ENCODE measurements at regions of chr4 and their contacts with region 1.

Region 1: GRCh38 chr4:56467284-56468096 is at the start of gene SRP72:
- DNase-seq: peak; percentile 81 to 95 (median 90)
- ATAC-seq: peak; percentile 96
- H3K4me3 ChIP-seq: peak within 1 kb of the TSS; percentile 63 to 98
- H3K4me3 Mint-ChIP-seq: peak within 1 kb of the TSS; percentile 100
- H3K27ac ChIP-seq: peak within 1 kb of the TSS; percentile 69 to 92
- H3K27ac Mint-ChIP-seq: peak within 1 kb of the TSS; percentile 100
- H3K4me1 ChIP-seq: peaks cover 44% of the 10 kb centered on the region
- H3K4me1 Mint-ChIP-seq: peaks cover 60% of the 10 kb centered on the region
- H3K27me3 ChIP-seq: no peaks in the 10 kb centered on the region
- H3K27me3 Mint-ChIP-seq: no peaks in the 10 kb centered on the region
- CTCF ChIP-seq: no peak
- total RNA-seq, gene SRP72: 142 to 148 TPM

Region 2: GRCh38 chr4:55853484-55854046 is 613.9 kb before region 1 on chr4 and contains the start of gene EXOC1:
- CTCF ChIA-PET with region 1: no interaction called
- POLR2A ChIA-PET with region 1: no interaction called
- intact Hi-C with region 1: loop called in 1 of 2 experiments (anchors 5 kb)
- DNase-seq: peak; percentile 90 to 98 (median 97)
- ATAC-seq: peak; percentile 96
- H3K4me3 ChIP-seq: peak within 1 kb of the TSS; percentile 96
- H3K4me3 Mint-ChIP-seq: peak within 1 kb of the TSS; percentile 36
- H3K27ac ChIP-seq: peak within 1 kb of the TSS; percentile 70 to 86
- H3K27ac Mint-ChIP-seq: peak within 1 kb of the TSS; percentile 64
- H3K4me1 ChIP-seq: peaks cover 40% of the 10 kb centered on the region
- H3K4me1 Mint-ChIP-seq: peaks cover 38% of the 10 kb centered on the region
- H3K27me3 ChIP-seq: no peaks in the 10 kb centered on the region
- H3K27me3 Mint-ChIP-seq: no peaks in the 10 kb centered on the region
- CTCF ChIP-seq: no peak
- total RNA-seq, gene EXOC1: 12.1 to 14.5 TPM

Region 3: DNA sequence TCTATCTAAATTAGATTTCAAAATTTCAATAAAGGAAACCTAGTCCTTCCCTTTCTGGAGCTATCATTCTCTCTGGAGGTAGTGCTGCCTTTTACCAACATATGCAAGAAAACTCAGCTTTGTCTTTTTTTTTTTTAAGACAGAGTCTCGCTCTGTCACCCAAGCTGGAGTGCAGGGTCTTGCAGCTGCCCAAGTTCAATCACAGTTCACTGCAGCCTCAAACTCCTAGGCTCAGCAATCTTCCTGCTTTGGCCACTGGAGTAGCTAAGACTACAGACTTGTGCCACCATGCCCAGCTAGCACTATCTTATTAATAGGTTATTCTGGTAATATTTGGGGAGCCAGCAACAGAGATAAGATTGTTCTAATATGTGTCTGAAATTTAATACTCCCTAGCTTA is 92.5 kb before region 1 on chr4:
- CTCF ChIA-PET with region 1: no interaction called
- POLR2A ChIA-PET with region 1: no interaction called
- intact Hi-C with region 1: no loop called
- DNase-seq: no peak
- ATAC-seq: no peak
- H3K4me3 ChIP-seq: no peak overlapping the region
- H3K4me3 Mint-ChIP-seq: no peak overlapping the region
- H3K27ac ChIP-seq: no peak overlapping the region
- H3K27ac Mint-ChIP-seq: no peak overlapping the region
- H3K4me1 ChIP-seq: no peaks in the 10 kb centered on the region
- H3K4me1 Mint-ChIP-seq: peaks cover 2% of the 10 kb centered on the region
- H3K27me3 ChIP-seq: no peaks in the 10 kb centered on the region
- H3K27me3 Mint-ChIP-seq: no peaks in the 10 kb centered on the region
- CTCF ChIP-seq: no peak

Region 4: DNA sequence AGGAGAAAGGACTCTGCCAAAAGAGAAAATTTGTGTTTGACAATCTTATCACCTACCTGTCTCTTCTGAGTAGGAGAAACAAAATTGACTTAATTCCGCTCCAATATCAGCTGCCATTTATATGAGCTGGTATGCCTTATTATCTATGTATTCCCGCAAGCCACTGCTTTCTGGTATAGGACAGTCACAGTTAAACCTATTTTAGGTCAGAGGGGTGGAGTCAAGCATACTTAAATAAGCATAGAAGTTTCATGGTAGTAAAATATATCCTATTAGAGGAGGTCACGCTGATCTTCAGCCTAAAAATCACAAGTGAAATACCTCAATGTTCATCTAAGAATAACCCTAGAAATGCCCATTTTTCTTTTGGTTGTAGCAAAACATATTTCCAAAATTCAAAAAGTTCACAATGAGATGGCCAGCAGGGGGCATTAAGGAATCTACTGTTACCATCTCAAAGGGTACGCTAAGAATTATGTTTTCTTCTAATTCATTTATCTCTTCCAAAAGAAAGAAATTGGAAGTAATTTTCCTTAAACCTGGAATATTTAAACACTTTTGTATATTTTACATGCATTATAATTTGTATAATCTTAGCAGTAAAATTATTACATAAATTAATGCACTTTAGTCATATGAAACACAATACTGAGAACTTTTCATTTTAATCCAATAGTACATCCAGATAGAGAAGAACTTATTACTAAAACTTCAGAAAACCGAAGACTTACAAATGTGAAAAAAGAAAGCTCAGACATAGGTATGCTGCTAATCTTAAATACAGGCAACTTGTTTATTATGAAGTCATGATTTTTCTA is 42.6 kb before region 1 on chr4:
- CTCF ChIA-PET with region 1: interaction called, 6 read pairs
- POLR2A ChIA-PET with region 1: no interaction called
- intact Hi-C with region 1: loop called (anchors 1 to 2 kb)
- DNase-seq: peak in 7 of 9 experiments; percentile 21 to 71 (median 52)
- ATAC-seq: peak; percentile 61
- H3K4me3 ChIP-seq: no peak overlapping the region
- H3K4me3 Mint-ChIP-seq: no peak overlapping the region
- H3K27ac ChIP-seq: no peak overlapping the region
- H3K27ac Mint-ChIP-seq: no peak overlapping the region
- H3K4me1 ChIP-seq: no peaks in the 10 kb centered on the region
- H3K4me1 Mint-ChIP-seq: peaks cover 8% of the 10 kb centered on the region
- H3K27me3 ChIP-seq: no peaks in the 10 kb centered on the region
- H3K27me3 Mint-ChIP-seq: no peaks in the 10 kb centered on the region
- CTCF ChIP-seq: peak; percentile 90

Region 5: DNA sequence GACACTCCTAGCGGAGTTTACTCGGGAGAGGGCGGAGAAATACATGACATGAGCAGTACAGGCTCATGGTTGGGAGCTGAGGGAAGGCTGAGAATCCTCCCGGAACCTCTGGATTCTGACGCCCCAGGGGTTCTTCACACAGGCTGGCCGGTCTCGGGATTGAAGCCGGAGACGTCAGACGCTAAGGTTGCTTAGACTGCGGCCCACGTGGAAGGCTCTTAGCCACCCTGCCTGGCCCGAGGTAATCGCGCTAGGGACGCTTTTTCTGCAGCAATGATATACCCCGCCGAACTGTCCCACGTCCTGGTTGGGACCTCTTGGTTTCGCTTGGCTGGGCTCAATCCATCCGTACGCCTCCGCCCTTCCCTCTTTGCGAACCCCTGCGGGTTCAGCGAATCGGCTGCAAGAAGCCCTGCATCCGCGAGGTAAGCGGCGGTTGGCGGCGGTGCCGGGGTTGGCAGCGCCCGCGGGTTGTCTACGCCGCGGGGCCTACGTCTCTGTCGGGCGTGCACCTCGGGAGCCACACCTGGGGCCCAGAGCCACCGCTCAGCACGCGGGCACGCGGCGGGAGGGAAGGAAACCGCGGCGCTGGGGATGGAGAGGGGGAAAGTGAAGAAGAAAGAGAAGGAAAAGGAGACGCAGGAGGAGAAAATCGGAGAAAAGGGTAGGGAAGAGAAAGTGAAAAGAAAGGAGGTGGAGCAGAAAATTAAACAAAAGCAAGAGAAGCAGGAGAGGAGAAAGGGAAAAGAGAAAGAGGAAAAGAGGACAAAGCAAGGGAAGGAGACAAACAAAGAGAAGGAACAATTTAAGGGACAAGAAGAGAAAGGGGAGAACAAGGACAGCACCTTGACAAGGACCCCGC is 38.0 kb after region 1 on chr4 and contains the start of gene ARL9:
- CTCF ChIA-PET with region 1: no interaction called
- POLR2A ChIA-PET with region 1: no interaction called
- intact Hi-C with region 1: loop called in 1 of 2 experiments (anchors 2 kb)
- DNase-seq: peak; percentile 40 to 83 (median 74)
- ATAC-seq: peak; percentile 97
- H3K4me3 ChIP-seq: peak within 1 kb of the TSS; percentile 50 to 70
- H3K4me3 Mint-ChIP-seq: peak within 1 kb of the TSS; percentile 89
- H3K27ac ChIP-seq: peak within 1 kb of the TSS in 1 of 2 experiments; percentile 26
- H3K27ac Mint-ChIP-seq: peak within 1 kb of the TSS; percentile 82
- H3K4me1 ChIP-seq: peaks cover 15% of the 10 kb centered on the region
- H3K4me1 Mint-ChIP-seq: peaks cover 17% of the 10 kb centered on the region
- H3K27me3 ChIP-seq: no peaks in the 10 kb centered on the region
- H3K27me3 Mint-ChIP-seq: peaks cover 2% of the 10 kb centered on the region
- CTCF ChIP-seq: no peak
- total RNA-seq, gene ARL9: 0.19 TPM in 1 of 2 experiments, not detected in the other

Region 6: DNA sequence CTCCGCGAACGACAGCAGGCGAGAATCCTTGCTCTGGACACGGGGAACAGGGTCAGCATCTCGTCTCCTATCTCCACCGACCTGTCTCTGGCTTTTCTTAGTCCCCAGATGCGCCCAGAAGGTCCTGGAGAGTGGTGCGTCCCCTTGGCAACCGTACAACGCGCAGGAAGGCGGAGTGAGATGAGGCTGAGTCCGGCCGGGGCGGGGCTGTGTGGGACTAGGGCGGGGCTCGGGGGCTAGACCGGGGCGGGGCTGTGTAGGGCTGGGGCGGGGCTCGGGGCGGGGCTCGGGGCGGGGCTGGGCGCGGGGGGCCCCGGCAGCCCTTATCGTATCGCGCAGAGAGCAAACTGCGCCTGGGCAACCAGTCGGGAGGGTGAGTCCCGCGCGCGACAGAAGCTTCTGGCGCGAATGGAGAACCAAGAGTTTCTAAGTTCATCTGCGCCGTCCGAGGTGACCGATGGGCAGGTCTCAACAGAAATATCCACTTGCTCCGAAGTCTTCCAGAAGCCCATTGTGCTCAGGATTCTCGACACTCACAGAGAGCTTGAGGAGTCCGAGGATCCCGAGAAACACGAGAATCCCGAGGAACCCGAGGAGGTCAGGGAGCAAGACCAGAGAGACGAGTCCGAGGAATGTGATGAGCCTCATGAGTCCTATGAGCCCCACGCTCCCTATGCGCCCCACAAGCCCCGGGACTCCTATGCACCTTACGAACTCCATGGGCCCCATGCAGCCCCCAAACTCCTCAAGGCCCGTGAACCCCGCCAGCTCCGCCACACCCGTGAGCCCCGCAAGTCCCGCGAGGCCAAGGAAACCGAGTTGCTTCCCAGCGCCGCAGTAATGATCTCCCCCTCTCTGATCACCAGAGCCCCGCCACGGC is 63.0 kb after region 1 on chr4:
- CTCF ChIA-PET with region 1: no interaction called
- POLR2A ChIA-PET with region 1: interaction called, 3 read pairs
- intact Hi-C with region 1: loop called in 1 of 2 experiments (anchors 1 kb)
- DNase-seq: peak; percentile 51 to 86 (median 81)
- ATAC-seq: peak; percentile 96
- H3K4me3 ChIP-seq: peak overlapping the region; percentile 59 to 87
- H3K4me3 Mint-ChIP-seq: no peak overlapping the region
- H3K27ac ChIP-seq: no peak overlapping the region
- H3K27ac Mint-ChIP-seq: no peak overlapping the region
- H3K4me1 ChIP-seq: peaks cover 6% of the 10 kb centered on the region
- H3K4me1 Mint-ChIP-seq: no peaks in the 10 kb centered on the region
- H3K27me3 ChIP-seq: peaks cover 3 to 5% of the 10 kb centered on the region in 2 experiments
- H3K27me3 Mint-ChIP-seq: peaks cover 9% of the 10 kb centered on the region
- CTCF ChIP-seq: no peak

Region 7: DNA sequence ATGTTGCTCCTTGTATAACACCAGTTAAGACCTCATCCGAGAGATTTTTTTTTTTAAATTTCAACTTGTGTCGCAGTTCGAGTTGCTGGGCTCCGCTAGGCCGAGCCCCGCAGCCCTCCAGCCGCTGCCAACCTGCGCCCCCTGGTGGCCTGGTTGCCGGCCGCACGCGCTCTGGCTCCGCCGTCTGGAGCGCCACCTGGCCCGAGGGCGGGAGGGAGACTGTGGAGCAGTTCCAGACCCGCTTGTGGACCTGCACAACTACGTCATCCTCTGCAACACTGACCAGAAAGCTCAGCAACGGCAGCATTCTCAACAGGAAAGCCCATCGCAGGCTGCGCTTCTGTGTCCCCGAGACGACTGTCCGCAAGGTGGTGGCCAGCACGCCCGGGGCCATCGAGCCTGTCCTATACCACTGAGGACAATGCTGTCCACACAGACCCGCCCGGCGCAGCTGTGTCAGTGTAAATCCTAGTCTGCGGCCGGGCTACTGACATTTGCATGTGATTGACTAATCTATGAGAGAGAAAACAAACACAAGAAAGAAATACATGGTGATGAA is 77.2 kb after region 1 on chr4:
- CTCF ChIA-PET with region 1: no interaction called
- POLR2A ChIA-PET with region 1: no interaction called
- intact Hi-C with region 1: loop called (anchors 1 to 2 kb)
- DNase-seq: peak; percentile 77 to 95 (median 85)
- ATAC-seq: peak; percentile 99
- H3K4me3 ChIP-seq: peak overlapping the region; percentile 27 to 38
- H3K4me3 Mint-ChIP-seq: peak overlapping the region; percentile 73
- H3K27ac ChIP-seq: no peak overlapping the region
- H3K27ac Mint-ChIP-seq: no peak overlapping the region
- H3K4me1 ChIP-seq: peaks cover 14% of the 10 kb centered on the region
- H3K4me1 Mint-ChIP-seq: peaks cover 15% of the 10 kb centered on the region
- H3K27me3 ChIP-seq: peaks cover 0 to 6% of the 10 kb centered on the region in 2 experiments
- H3K27me3 Mint-ChIP-seq: no peaks in the 10 kb centered on the region
- CTCF ChIP-seq: peak; percentile 98

Region 8: GRCh38 chr4:56977321-56978012 is 510.0 kb after region 1 on chr4 and contains the start of gene NOA1:
- CTCF ChIA-PET with region 1: no interaction called
- POLR2A ChIA-PET with region 1: interaction called, 3 read pairs
- intact Hi-C with region 1: loop called (anchors 1 to 2 kb)
- DNase-seq: peak; percentile 95 to 99 (median 97)
- ATAC-seq: peak; percentile 79
- H3K4me3 ChIP-seq: peak within 1 kb of the TSS; percentile 94 to 100
- H3K4me3 Mint-ChIP-seq: peak within 1 kb of the TSS; percentile 93
- H3K27ac ChIP-seq: peak within 1 kb of the TSS; percentile 78 to 84
- H3K27ac Mint-ChIP-seq: peak within 1 kb of the TSS; percentile 94
- H3K4me1 ChIP-seq: peaks cover 45% of the 10 kb centered on the region
- H3K4me1 Mint-ChIP-seq: peaks cover 56% of the 10 kb centered on the region
- H3K27me3 ChIP-seq: no peaks in the 10 kb centered on the region
- H3K27me3 Mint-ChIP-seq: no peaks in the 10 kb centered on the region
- CTCF ChIP-seq: no peak
- total RNA-seq, gene NOA1: 16.5 to 17.2 TPM